HAP-1 (cell line): ENCODE measurements at regions of chr11 and their contacts with region 1.

Region 1: DNA sequence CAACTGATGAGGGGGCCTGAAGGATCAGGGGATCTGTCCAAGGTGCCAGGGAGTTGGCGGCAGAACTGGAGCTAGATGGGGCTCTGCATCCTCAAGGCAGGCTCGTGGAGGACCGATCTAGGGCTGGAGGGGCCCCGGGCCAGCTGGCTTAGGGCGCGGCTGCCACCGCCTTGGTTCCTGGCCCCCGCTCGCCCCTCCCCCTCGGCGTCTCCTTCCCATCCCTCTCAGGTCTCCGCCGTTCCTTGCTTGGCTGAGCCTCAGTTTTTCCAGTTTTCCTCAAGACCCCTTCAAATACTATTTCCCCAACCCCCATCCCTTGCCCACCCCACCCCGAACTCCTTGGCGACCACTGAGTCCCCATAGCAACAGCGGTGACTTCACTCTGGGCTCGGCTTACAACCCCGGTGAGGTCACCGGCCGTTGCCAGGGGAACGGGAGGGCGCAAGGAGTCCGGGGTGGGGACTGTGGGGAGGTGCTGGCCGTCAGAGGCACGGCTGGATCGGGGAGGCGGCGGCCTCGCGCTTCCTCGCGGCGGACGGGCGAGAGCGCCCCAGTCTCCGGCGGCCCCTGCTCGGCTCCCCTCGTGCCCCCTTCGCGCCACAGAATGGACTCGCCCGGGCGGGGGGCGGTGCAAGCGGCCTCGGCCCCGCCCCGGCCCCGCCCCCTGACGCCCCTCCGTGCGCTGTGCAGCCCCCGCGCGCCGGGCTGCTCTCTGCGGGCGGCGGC is 7.5 kb downstream of the FREY1 start:
- DNase-seq: peak; percentile 80 to 91
- H3K4me3 ChIP-seq: peak overlapping the region; percentile 48
- H3K4me1 ChIP-seq: peaks cover 6% of the 10 kb centered on the region
- H3K27me3 ChIP-seq: no peaks in the 10 kb centered on the region

Region 2: DNA sequence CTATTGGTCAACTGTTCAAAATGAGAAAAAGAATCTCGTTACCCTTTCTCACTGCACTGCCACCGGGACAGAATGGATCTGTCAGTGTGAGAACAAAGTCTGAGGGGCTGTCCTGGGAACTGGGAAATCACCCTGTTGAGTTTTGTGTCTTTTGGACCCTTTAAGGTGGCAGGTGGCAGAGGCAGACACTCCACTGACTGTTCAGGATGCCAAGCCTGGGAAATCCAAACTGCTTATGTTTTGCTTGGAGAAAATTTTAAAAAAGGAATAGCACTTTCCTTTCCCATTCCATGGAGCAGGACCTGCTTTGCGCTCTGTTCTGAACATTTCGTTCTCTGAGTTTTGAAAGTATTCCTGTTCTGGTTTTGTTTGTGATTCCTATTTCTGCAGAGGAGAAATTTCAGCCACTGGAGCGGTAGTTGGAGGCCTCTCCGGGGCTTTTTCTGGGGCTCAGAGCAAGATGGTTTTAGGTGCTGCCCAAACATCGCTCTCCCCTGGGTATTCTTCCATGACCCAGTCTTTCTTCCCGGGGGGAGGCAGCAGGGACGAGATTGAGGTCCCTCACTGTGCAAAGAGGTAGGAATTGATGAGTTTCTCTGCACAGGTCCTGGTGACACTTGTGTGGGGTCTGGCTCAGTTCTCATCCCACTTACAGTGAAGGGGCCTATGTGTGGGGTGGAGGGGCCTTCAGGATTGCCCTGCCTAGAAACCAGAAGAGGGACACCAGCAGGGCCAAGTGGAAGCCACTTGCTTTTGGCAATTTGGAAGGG is 475.0 kb before region 1 on chr11:
- in situ Hi-C with region 1: no loop called
- DNase-seq: no peak
- H3K4me3 ChIP-seq: no peak overlapping the region
- H3K4me1 ChIP-seq: no peaks in the 10 kb centered on the region
- H3K27me3 ChIP-seq: 0 out of 2 replicates have a peak, but pooled peaks cover 5% of the 10 kb centered on the region

Region 3: GRCh38 chr11:45964911-45965389 is 65.3 kb after region 1 on chr11:
- in situ Hi-C with region 1: loop called (anchors 10 kb)
- DNase-seq: peak; percentile 77 to 81
- H3K4me3 ChIP-seq: no peak overlapping the region
- H3K4me1 ChIP-seq: no peaks in the 10 kb centered on the region
- H3K27me3 ChIP-seq: no peaks in the 10 kb centered on the region